Endothelial cell of umbilical vein (primary cell): ENCODE measurements at regions of chr10 and their contacts with region 1.

Region 1: DNA sequence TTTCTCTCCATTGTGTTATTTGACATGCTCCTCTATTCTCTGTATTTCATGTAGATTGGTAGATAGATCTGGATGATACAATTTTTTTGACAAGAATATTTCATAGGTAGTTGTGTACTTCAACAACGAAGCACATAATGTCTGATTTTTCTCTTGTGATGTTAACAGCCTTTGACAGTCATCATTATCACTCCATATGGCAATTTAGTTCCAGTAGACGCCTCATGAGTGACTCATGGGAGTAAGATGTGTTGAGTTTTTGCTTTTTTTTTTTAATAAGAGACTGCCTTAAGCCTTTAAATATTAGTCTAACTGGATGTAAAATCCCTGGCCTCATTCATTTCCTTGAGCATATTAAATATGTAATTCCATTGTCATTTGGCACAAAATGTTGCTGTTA is 123.5 kb upstream of the ZNF32 start:
- DNase-seq: no peak
- H3K4me3 ChIP-seq: no peak overlapping the region
- H3K27ac ChIP-seq: no peak overlapping the region
- H3K4me1 ChIP-seq: peaks cover 11% of the 10 kb centered on the region
- H3K27me3 ChIP-seq: no peaks in the 10 kb centered on the region
- CTCF ChIP-seq: no peak
- POLR2A ChIP-seq: no peak

Region 2: DNA sequence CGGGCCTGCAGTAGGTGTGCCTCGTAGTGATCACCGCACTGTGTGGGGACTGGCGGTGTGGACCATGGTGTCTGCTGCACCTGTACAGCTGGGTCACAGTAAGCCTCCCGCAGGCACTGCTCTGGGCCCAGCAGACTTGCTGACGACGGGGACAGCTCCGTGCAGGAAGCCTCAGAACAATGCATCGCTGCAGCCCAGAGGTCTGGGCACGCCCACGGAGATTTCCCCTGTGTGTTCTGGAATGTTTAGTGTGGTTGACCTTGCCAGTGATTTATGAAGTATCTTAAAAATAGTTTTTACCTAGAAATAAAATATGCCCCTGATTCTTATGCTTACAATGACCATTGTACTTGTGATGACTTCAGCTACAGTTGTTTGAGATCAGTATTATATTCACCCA is 64.4 kb before region 1 on chr10:
- CTCF ChIA-PET with region 1: no interaction called
- POLR2A ChIA-PET with region 1: no interaction called
- dilution Hi-C with region 1: no loop called
- intact Hi-C with region 1: loop called (anchors 5 kb)
- DNase-seq: peak; percentile 58
- H3K4me3 ChIP-seq: no peak overlapping the region
- H3K27ac ChIP-seq: peak overlapping the region; percentile 37
- H3K4me1 ChIP-seq: peaks cover 9% of the 10 kb centered on the region
- H3K27me3 ChIP-seq: no peaks in the 10 kb centered on the region
- CTCF ChIP-seq: no peak
- POLR2A ChIP-seq: no peak

Region 3: GRCh38 chr10:43793704-43794103 is 21.5 kb after region 1 on chr10:
- CTCF ChIA-PET with region 1: no interaction called
- POLR2A ChIA-PET with region 1: no interaction called
- dilution Hi-C with region 1: no loop called
- intact Hi-C with region 1: loop called (anchors 2 kb)
- DNase-seq: no peak
- H3K4me3 ChIP-seq: no peak overlapping the region
- H3K27ac ChIP-seq: no peak overlapping the region
- H3K4me1 ChIP-seq: no peaks in the 10 kb centered on the region
- H3K27me3 ChIP-seq: peaks cover 3% of the 10 kb centered on the region in 2 experiments
- CTCF ChIP-seq: no peak
- POLR2A ChIP-seq: no peak